ENCODE measurements at regions of chr7 and their contacts with region 1.

Region 1: DNA sequence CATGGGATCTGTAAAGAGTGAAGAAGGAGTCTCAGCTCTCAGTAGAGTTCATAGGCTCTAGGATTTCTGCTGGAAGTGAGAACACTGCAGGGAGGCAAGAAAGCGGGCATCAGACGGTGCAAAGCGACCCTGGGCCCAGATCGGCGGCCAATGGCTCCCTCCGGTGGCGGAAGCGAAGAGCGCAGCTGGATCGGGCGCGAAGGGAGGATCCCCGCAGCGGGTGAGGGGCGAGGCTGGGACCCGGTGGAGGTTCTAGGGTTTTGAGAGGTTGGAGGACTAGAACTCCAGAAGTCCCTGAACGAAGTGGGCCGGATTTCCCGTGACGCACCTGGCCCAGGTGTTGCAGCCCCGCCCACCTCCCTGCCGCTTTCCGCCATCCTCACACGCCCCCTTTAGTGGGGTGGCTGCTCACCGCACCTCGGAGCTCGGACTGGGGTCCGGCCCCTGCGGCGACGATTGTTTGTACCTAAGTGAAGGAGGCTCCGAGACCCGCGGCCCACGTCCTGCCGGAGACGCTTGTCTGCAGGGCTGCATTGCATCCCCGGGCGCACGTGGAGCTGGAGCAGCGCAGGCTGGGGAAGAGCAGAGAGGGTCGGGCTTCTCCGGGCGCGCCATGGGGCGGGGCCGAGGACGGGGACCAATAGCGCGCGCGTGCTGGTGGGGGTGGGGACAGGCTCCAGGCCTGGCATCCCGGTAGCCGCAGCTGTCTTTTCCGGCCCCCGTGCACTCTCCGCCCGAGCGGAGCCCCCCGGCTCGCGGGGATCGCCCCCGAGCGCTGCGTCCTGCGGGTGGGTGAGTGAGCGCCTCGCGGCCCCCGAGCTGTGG is at the start of gene SLC12A9:
- DNase-seq: peak; percentile 31
- H3K4me3 ChIP-seq: peak within 1 kb of the TSS; percentile 79
- H3K27me3 ChIP-seq: no peaks in the 10 kb centered on the region
- CTCF ChIP-seq: peak; percentile 90
- polyA plus RNA-seq, gene SLC12A9: 14.2 and 23.1 TPM in 2 replicates

Region 2: DNA sequence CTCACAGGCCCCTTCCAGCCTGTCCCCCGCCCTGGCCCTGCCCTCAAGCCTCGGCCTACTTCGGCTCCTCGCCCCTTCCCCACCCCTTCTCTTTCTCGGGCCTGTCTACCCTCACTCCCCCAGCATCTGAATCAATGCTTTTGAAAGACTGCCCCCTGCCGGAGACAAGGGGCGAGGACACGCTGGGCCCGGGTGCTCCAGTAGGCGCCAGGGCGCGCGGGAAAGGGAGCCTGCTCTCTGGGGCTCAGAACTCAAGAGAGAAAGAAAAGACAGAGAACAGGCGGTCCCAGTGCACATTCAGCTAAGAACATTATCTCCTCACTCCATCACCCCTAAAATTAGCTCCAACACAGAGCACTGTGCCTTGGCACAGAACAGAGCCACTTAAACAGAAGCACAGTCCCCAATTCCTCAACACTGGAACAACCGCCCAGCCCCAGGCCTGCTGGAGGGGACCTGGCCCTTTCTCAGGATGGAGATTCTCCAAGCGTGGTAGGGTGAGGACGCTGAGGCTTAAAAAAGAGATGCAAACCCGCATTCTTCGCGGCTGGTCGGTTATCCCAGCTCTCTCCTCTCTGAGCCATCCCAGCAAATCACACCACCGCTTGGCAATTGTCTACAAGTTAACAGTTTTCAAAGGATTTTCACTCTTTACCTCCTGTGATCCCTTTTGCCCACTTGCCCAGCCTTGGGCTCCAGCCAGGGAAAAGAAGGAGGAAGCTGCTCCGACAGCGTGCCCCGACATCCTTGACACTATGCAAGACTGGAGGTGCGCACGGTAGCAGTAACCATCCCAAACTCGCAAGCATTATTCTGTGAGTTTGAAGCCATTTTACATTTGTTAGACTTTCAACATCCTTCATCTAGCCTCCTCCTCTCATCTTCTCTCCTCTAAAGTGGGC is 160.3 kb before region 1 on chr7:
- CTCF ChIA-PET with region 1: interaction called, 23 read pairs
- POLR2A ChIA-PET with region 1: no interaction called
- DNase-seq: no peak
- H3K4me3 ChIP-seq: peak overlapping the region; percentile 9; the same call in 1 of the 2 replicates
- H3K27me3 ChIP-seq: no peaks in the 10 kb centered on the region; the same call in 1 of the 2 replicates
- CTCF ChIP-seq: peak; percentile 95

Region 3: DNA sequence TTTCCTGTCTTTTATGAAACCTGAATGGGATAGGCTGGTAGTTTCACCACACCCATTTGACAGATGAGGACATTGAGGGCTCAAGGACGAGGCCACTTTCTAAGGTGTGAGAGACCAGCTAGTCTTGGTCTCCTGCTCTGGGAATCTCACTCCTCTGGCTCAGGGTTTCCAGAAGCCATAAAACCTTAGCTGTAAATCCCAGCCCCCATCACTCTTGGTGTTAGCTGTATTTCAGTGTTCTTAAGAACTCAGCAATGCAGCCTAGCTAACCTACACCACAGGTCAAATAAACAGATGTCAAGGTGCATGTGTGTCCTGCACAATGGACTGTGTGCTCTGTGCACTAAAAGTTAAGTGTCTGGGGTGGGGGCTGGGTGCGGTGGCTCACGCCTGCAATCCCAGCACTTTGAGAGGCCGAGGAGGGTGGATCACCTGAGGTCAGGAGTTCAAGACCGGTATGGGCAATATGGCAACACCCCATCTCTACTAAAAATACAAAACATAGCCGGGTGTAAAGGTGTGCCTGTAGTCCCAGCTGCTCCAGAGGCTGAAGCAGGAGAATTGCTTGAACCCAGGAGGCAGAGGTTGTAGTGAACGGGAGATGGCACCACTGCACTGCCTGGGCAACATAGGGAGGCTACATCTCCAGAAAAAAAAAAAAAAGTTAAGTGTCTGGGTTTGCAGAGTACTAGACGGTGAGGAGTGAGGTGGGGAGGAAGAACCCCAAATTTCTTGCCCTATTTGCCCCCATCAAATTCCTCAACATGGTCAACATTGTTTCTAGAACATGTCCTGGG is 132.5 kb before region 1 on chr7:
- CTCF ChIA-PET with region 1: interaction called, 65 read pairs
- POLR2A ChIA-PET with region 1: no interaction called
- DNase-seq: no peak
- H3K4me3 ChIP-seq: no peak overlapping the region
- H3K27me3 ChIP-seq: peaks cover 38% of the 10 kb centered on the region
- CTCF ChIP-seq: peak; percentile 60

Region 4: DNA sequence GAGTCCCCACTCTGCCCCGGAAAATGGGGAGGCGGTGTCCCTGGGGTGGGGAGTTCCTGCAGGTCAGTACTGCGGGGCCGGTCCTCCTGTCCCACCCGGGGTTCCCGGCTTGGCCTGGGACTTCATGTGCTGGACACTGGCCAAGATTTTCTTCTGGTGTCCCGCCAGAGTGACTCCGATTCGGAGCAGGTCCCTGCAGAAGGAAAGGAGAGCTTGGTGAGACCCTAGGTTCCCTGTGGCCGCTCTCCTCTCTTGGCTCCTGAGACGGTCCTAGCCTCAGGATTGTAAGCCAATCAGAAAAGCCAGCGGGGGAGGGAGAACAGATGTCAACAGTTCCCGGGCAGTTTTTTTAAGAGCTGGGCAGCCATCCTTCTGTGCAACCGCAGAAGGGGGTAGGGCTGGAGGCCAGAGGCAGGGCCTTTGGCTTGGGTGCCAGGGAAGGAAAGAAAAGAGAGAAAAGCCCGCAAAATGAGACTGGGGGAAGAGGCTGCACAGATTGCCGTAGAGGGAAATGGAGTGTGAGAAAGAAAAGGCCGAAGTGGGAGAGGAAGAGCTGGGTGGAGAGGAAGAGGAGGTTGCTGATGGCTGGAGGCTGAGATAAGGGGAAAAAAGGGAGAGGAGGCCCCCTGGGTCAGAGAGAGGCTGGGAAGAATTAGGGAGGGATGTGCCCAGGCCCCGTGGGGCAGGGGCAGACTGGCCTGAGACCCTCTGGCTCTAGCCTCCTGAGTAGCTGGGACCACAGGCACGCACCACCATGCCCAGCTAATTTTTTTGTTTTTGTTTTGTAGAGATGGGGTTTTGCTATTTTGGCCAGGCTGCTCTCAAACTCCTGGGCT is 48.6 kb before region 1 on chr7:
- CTCF ChIA-PET with region 1: interaction called, 143 read pairs
- POLR2A ChIA-PET with region 1: no interaction called
- DNase-seq: peak; percentile 39
- H3K4me3 ChIP-seq: no peak overlapping the region
- H3K27me3 ChIP-seq: no peaks in the 10 kb centered on the region
- CTCF ChIP-seq: no peak

Region 5: DNA sequence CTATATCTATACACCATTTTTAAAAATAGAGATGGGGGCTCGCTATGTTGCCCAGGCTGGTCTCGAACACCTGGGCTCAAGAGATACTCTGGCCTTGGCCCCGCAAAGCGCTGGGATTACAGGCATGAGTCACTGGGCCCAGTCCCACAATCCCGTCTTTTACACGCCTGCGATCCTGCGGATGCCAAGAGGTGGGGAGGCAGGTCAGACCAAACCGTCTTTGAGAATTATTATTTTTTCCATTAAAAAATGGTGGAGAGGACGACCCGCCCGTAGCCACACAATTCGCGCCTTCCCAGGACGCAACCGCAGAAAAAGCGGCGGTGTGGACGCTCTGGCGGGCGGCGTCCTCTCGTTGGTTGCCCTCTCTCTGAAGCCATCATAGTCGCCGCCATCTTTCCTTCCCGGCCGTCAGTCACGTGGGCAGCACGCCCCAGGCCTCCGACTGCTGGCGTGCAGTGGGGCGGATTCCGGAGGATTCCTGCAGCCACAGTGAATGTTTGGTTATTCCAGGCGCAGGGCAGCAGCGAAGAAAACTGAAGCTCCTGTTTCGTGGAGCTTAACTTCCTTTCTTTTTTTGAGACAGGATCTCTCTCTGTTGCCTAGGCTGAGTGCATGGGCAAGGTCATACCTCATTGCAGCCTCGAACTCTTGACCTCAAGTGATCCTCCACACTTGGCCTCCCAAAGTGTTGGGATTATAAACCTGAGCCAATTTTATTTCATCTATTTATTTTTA is 15.0 kb before region 1 on chr7:
- CTCF ChIA-PET with region 1: interaction called, 42 read pairs
- POLR2A ChIA-PET with region 1: no interaction called
- DNase-seq: peak; percentile 44
- H3K4me3 ChIP-seq: peak overlapping the region; percentile 32
- H3K27me3 ChIP-seq: no peaks in the 10 kb centered on the region
- CTCF ChIP-seq: no peak

Measured in BJ (cell line).